ENCODE measurements at regions of chr3 and their contacts with region 1.

Region 1: DNA sequence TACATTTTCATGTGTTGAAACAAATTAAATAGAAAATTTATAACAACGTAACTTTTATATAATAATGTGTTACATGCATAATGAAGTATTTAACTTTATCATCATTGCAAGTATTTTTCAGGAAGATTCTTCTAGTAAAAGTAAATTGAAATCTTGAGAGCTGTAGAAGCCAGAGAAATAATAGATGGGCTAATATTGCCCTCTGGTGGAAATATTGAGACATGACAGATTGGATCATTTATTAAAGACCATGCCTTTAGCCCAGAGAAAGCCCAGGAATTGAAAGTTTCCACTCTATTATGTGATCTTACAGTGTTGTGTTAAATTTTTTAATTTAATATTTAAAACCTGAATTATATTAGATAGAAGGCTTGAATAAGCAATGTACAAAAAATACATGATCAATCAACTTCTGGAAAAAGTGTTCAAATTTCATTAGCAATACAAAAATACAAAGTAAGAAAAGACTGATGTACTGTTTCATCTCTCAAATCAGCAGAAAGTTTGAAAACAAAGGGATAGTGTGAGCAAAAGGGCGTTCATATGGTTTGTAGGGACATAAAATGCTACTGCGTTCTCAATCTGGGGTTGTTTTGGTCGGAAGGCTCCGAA is 52.7 kb upstream of the SPTSSB start:
- DNase-seq: no peak
- H3K4me3 ChIP-seq: no peak overlapping the region
- H3K27ac ChIP-seq: no peak overlapping the region
- H3K27me3 ChIP-seq: no peaks in the 10 kb centered on the region
- CTCF ChIP-seq: peak; percentile 58

Region 2: GRCh38 chr3:160921020-160921635 is 502.9 kb before region 1 on chr3:
- CTCF ChIA-PET with region 1: interaction called, 13 read pairs
- POLR2A ChIA-PET with region 1: no interaction called
- DNase-seq: no peak
- H3K4me3 ChIP-seq: no peak overlapping the region
- H3K27ac ChIP-seq: no peak overlapping the region
- H3K27me3 ChIP-seq: no peaks in the 10 kb centered on the region
- CTCF ChIP-seq: peak; percentile 92

Region 3: DNA sequence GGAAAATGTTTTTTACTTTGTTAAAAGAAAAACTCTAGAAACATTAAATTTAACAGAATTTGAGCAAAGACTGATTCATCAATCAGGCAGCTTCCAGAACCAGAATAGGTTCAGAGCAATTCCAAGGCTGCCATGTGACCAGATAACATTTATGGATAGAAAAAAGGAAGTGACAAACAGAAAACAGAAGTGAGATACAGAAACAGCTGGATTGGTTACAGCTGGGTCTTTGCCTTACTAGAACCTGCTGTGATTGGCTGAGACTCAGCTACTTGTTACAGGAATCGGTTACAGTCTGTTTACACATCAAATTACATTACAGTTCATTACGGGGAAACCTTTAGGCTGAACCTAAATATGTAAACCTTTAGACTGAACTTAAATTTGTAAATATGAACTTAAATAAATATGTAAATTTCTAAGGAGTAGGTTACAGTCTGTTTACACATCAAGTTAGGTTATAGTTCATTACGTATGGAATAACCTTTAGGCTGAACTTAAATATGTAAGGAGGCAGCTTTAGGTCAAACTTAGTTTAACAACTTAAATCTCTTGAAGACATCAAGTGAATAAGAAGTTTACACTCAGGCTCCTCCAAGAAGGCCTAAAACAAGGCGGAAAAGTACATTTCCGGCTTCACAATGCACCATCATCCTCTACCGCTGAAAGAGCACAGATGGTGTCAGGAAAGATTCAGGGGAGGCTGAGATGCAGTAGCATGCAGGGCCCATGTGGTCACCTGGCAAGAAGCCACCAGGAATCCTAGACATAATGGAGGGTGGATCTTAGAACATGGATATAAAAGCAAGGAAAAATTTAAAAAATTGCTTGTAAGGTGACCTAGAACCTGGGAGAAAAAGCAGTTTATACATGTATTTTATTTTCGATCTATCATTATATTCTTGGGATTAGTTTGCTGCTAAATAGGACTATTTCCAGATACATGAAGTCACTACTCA is 50.4 kb after region 1 on chr3:
- CTCF ChIA-PET with region 1: no interaction called
- POLR2A ChIA-PET with region 1: no interaction called
- DNase-seq: no peak
- H3K4me3 ChIP-seq: no peak overlapping the region
- H3K27ac ChIP-seq: no peak overlapping the region
- H3K27me3 ChIP-seq: no peaks in the 10 kb centered on the region
- CTCF ChIP-seq: no peak

Region 4: GRCh38 chr3:161672478-161672877 is 248.5 kb after region 1 on chr3:
- CTCF ChIA-PET with region 1: no interaction called
- POLR2A ChIA-PET with region 1: no interaction called
- DNase-seq: no peak
- H3K4me3 ChIP-seq: no peak overlapping the region
- H3K27ac ChIP-seq: no peak overlapping the region
- H3K27me3 ChIP-seq: no peaks in the 10 kb centered on the region
- CTCF ChIP-seq: no peak

Measured in AG04450 (cell line).